ENCODE measurements at regions of chr14 and their contacts with region 1.

Region 1: GRCh38 chr14:88562831-88563686 is at the start of gene ZC3H14:
- DNase-seq: peak; percentile 77
- ATAC-seq: peak; percentile 97
- H3K4me3 ChIP-seq: peak within 1 kb of the TSS; percentile 91 to 100 (median 93)
- H3K27ac ChIP-seq: peak within 1 kb of the TSS; percentile 95
- H3K4me1 ChIP-seq: peaks cover 34% of the 10 kb centered on the region
- H3K27me3 ChIP-seq: no peaks in the 10 kb centered on the region; a peak in 1 of 5 replicates
- CTCF ChIP-seq: peak; percentile 48; the same call in 1 of the 2 replicates
- EP300 ChIP-seq: no peak
- POLR2A ChIP-seq: peak; percentile 87 to 91
- RAD21 ChIP-seq: peak; percentile 44; the same call in 1 of the 2 replicates
- total RNA-seq, gene ZC3H14: 65.1 and 94.2 TPM in 2 replicates

Region 2: DNA sequence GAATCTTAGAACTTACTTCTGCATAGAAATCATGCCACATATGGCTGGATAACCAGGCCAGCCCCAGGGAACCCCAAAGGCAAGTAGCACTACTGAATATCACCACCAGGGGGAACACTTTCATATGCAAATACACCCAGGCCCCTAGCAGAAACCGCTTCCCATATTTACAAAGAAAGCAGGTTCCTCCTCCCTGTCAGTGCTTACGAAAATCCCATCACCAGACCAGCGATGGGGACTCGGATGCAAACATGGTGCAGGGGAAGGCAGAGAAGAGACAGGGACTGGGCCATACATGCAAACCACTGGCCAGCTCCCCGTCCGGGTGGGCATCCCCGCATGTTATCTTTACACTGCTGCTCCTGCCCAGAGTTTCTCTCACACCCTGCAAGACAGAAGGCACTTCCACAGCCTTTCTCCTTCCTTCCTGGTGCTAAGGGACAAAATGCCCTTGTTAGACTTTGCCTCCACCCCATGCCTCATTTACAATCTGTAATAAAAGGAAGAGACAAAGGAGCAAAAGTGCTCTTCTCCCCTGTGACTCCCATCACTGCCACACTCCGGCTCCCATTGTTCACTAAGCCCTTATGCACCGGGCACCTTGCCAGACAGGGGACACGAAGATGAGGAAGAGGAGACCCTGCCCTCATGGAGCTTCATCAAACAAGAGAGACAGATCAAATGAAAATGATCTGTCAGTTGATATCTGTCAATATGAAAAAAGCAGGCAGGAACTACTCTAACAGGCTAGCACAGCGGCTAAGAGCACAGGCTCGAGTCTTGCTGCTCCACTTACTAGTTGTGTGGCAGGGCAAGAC is 70.6 kb before region 1 on chr14:
- CTCF ChIA-PET with region 1: interaction called, 10 read pairs
- POLR2A ChIA-PET with region 1: no interaction called
- in situ Hi-C with region 1: loop called (anchors 5 kb)
- intact Hi-C with region 1: loop called (anchors 1 kb)
- DNase-seq: peak; percentile 65
- ATAC-seq: peak; percentile 95
- H3K4me3 ChIP-seq: no peak overlapping the region
- H3K27ac ChIP-seq: no peak overlapping the region
- H3K4me1 ChIP-seq: no peaks in the 10 kb centered on the region
- H3K27me3 ChIP-seq: no peaks in the 10 kb centered on the region
- CTCF ChIP-seq: peak; percentile 80
- EP300 ChIP-seq: no peak
- POLR2A ChIP-seq: no peak
- RAD21 ChIP-seq: peak; percentile 72

Region 3: DNA sequence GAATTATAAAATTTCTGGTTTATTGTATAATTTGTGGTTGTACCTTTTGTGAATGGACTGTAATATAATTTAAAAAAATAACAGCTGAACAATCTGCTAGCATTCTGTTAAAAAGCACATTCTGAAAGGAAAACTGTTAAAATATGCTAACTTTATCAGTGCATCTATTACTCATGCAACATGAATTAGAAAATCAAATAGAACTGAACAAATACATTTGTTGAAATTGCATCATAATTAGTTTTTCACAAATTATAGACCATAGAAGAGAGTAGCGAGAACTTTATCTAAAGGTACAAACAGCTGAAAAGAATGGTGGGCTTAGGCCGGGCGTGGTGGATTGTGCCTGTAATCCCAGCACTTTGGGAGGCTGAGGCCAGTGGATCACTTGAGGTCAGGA is 41.2 kb before region 1 on chr14:
- CTCF ChIA-PET with region 1: no interaction called
- POLR2A ChIA-PET with region 1: no interaction called
- in situ Hi-C with region 1: no loop called
- intact Hi-C with region 1: loop called (anchors 5 kb)
- DNase-seq: no peak
- ATAC-seq: no peak
- H3K4me3 ChIP-seq: no peak overlapping the region
- H3K27ac ChIP-seq: no peak overlapping the region
- H3K4me1 ChIP-seq: peaks cover 6% of the 10 kb centered on the region
- H3K27me3 ChIP-seq: no peaks in the 10 kb centered on the region
- CTCF ChIP-seq: no peak
- EP300 ChIP-seq: no peak
- POLR2A ChIP-seq: no peak
- RAD21 ChIP-seq: no peak

Region 4: GRCh38 chr14:88613552-88614010 is 50.5 kb after region 1 on chr14:
- CTCF ChIA-PET with region 1: no interaction called
- POLR2A ChIA-PET with region 1: no interaction called
- in situ Hi-C with region 1: no loop called
- intact Hi-C with region 1: loop called (anchors 2 kb)
- DNase-seq: peak; percentile 86
- ATAC-seq: peak; percentile 99
- H3K4me3 ChIP-seq: no peak overlapping the region
- H3K27ac ChIP-seq: peak overlapping the region; percentile 53
- H3K4me1 ChIP-seq: peaks cover 17% of the 10 kb centered on the region
- H3K27me3 ChIP-seq: no peaks in the 10 kb centered on the region
- CTCF ChIP-seq: no peak
- EP300 ChIP-seq: peak in 1 of 2 experiments; percentile 63; a peak in 1 of 4 replicates
- POLR2A ChIP-seq: no peak
- RAD21 ChIP-seq: no peak